ENCODE measurements at regions of chr14 and their contacts with region 1.

Region 1: GRCh38 chr14:22556990-22557623 is 31.9 kb downstream of the DAD1 start:
- DNase-seq: peak; percentile 78 to 99 (median 94)
- ATAC-seq: peak; percentile 10 to 20
- H3K4me3 Mint-ChIP-seq: peak overlapping the region; percentile 61 to 97 (median 80)
- H3K27ac Mint-ChIP-seq: peak overlapping the region; percentile 96 to 100 (median 99)
- H3K4me1 Mint-ChIP-seq: peaks cover 50 to 95% (median 90%) of the 10 kb centered on the region in 4 donors
- H3K27me3 Mint-ChIP-seq: peaks cover 0 to 4% (median 0%) of the 10 kb centered on the region in 5 donors

Region 2: GRCh38 chr14:21978184-21978998 is 578.7 kb before region 1 on chr14:
- POLR2A ChIA-PET with region 1: interaction called, 13 read pairs
- DNase-seq: peak; percentile 30 to 79 (median 58)
- ATAC-seq: peak; percentile 72 to 80
- H3K4me3 Mint-ChIP-seq: peak overlapping the region; percentile 21 to 84 (median 72)
- H3K27ac Mint-ChIP-seq: peak overlapping the region; percentile 22 to 91 (median 72)
- H3K4me1 Mint-ChIP-seq: peaks cover 10 to 24% (median 19%) of the 10 kb centered on the region in 4 donors
- H3K27me3 Mint-ChIP-seq: peaks cover 0 to 15% (median 0%) of the 10 kb centered on the region in 5 donors

Region 3: DNA sequence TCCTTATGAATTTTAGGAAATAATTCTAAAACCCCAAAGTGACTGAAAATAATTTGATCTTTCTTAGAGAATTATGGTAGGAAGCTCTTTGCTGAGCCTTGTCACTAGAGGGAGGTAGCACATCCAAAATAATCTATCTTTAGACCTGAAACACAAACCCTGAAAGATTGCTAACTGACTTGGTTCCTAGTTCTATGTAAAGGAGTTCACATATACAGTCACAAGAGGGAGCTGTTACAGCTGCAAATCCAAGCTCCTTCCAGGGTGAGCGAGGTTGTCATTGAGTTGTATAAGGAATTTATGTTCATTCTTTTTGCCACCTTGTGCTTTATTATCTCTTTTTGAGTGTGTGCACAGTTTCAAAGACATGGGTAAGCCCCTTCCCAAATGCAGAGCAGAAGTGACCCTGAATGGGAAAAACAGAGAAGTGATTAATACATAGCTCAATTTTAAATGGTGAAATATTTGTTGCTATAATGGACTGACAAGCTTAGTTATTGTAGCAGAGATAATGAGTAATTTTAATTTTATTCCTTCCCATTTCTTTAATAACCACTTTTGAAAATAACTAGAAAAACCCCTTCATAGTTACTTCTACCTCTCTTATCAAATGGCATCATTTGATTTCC is 356.0 kb before region 1 on chr14:
- POLR2A ChIA-PET with region 1: interaction called, 13 read pairs
- DNase-seq: peak in 3 of 10 donors; percentile 4 to 44 (median 34)
- ATAC-seq: peak; percentile 72 to 78
- H3K4me3 Mint-ChIP-seq: no peak overlapping the region
- H3K27ac Mint-ChIP-seq: no peak overlapping the region
- H3K4me1 Mint-ChIP-seq: peaks cover 0 to 8% (median 4%) of the 10 kb centered on the region in 4 donors
- H3K27me3 Mint-ChIP-seq: no peaks in the 10 kb centered on the region

Region 4: DNA sequence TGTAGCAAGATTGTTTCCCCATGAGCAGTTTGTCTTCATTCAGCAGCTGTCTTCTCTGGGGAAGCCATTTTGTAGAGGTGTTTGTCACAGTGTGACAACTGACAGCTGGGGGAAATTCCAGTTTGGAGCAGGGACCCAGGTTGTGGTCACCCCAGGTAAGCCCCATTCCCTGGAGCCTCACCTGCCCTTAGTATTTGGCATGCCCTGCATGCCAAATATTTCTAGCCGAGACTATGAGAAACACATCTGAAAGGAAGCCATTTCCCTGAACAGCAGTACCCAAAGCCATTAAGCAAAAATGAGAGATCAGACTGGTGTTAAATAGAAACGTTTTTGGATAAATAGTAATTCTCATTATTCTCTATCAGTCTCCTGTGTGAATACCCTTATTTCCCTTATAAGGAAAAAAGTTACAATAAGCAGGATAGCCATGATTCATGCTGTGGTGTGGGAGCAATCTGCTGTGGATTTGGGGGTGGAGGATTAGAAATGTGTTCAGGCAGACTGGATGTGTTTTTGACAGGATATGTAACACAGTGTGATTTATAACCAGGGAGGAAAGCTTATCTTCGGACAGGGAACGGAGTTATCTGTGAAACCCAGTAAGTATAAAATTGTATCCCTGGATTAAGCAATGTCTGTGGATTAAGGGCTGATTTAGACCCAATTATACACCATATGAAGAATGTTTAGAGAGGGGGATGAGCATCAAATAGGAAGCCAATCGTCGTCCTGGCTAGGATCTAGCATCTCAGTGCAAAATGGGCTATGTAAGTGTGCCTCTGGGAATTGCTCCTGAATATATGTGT is 37.0 kb before region 1 on chr14:
- POLR2A ChIA-PET with region 1: interaction called, 879 read pairs
- DNase-seq: no peak
- ATAC-seq: peak; percentile 19
- H3K4me3 Mint-ChIP-seq: peak overlapping the region; percentile 80 to 94 (median 90)
- H3K27ac Mint-ChIP-seq: peak overlapping the region; percentile 94 to 99 (median 98)
- H3K4me1 Mint-ChIP-seq: peaks cover 44 to 100% (median 89%) of the 10 kb centered on the region in 4 donors
- H3K27me3 Mint-ChIP-seq: no peaks in the 10 kb centered on the region

Region 5: GRCh38 chr14:22570132-22570949 is 13.2 kb after region 1 on chr14:
- POLR2A ChIA-PET with region 1: interaction called, 249 read pairs
- DNase-seq: peak; percentile 54 to 97 (median 92)
- ATAC-seq: peak; percentile 82 to 91
- H3K4me3 Mint-ChIP-seq: peak overlapping the region; percentile 61 to 89 (median 82)
- H3K27ac Mint-ChIP-seq: peak overlapping the region; percentile 95 to 100 (median 99)
- H3K4me1 Mint-ChIP-seq: peaks cover 28 to 60% (median 52%) of the 10 kb centered on the region in 4 donors
- H3K27me3 Mint-ChIP-seq: no peaks in the 10 kb centered on the region

Region 6: DNA sequence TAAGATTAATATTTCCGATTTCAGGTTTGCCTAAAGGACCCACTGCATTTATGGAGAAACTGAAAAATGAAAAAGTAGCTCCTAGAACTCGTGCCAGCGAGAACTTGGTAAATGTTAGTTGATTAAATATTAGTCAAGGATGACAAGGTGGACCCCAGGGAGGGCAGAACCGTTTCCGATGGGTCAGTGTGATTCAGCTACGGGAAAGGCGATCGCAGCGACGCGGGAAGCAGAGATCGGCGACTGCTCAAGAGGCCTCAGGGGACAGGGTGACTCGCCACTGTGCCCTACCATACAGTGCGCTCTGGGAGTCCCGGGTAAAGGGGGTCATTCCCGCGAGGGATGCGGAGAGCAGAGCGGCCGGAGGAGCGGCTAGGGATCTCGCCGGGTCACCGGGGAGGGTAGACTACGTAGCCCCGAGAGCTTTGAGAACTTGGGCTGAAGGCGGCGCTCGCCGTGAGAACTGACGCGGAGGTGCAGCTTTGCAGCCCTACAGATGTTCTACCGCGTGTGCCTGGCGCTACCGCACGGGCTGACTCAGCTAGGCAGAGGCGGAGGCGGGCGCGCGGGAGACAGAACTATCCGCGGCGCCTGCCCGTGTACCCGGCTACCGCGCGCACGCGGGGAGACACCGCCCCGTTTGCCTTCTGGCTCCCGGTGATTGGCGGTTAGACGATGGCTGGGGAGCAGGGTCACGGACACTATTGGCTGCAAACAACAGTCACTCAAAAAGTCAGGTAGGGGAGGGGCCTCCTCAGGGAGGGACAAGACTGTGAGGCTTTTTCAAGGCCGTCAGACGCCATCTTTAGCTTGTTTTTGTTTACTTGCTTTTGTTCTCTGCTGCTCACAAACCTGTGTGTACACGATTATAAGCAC is 449.7 kb after region 1 on chr14:
- POLR2A ChIA-PET with region 1: interaction called, 12 read pairs
- DNase-seq: peak; percentile 94 to 99 (median 97)
- ATAC-seq: peak; percentile 95 to 96
- H3K4me3 Mint-ChIP-seq: peak overlapping the region; percentile 93 to 98 (median 94)
- H3K27ac Mint-ChIP-seq: peak overlapping the region; percentile 92 to 98 (median 97)
- H3K4me1 Mint-ChIP-seq: peaks cover 16 to 50% (median 41%) of the 10 kb centered on the region in 4 donors
- H3K27me3 Mint-ChIP-seq: no peaks in the 10 kb centered on the region